Activated CD4-positive, alpha-beta T cell treated with anti-CD3 and anti-CD28 coated beads for 36 hours (primary cell): ENCODE measurements at regions of chr19 and their contacts with region 1.

Region 1: GRCh38 chr19:892243-893050 is 540 bp downstream of the MED16 start:
- DNase-seq: peak; percentile 33
- ATAC-seq: peak; percentile 37
- H3K4me3 Mint-ChIP-seq: peak overlapping the region; percentile 78
- H3K27ac Mint-ChIP-seq: peak overlapping the region; percentile 77
- H3K4me1 Mint-ChIP-seq: peaks cover 13% of the 10 kb centered on the region
- H3K27me3 Mint-ChIP-seq: no peaks in the 10 kb centered on the region

Region 2: GRCh38 chr19:873084-874041 is 19.1 kb before region 1 on chr19:
- CTCF ChIA-PET with region 1: no interaction called
- POLR2A ChIA-PET with region 1: no interaction called
- intact Hi-C with region 1: loop called in 1 of 2 experiments (anchors 1 kb)
- DNase-seq: peak; percentile 85
- ATAC-seq: peak; percentile 89
- H3K4me3 Mint-ChIP-seq: no peak overlapping the region
- H3K27ac Mint-ChIP-seq: no peak overlapping the region
- H3K4me1 Mint-ChIP-seq: peaks cover 12% of the 10 kb centered on the region
- H3K27me3 Mint-ChIP-seq: no peaks in the 10 kb centered on the region

Region 3: GRCh38 chr19:904545-904944 is 12.1 kb after region 1 on chr19:
- CTCF ChIA-PET with region 1: interaction called, 5 read pairs
- POLR2A ChIA-PET with region 1: interaction called, 10 read pairs
- intact Hi-C with region 1: loop called (anchors 1 to 2 kb)
- DNase-seq: no peak
- ATAC-seq: no peak
- H3K4me3 Mint-ChIP-seq: no peak overlapping the region
- H3K27ac Mint-ChIP-seq: no peak overlapping the region
- H3K4me1 Mint-ChIP-seq: peaks cover 53% of the 10 kb centered on the region
- H3K27me3 Mint-ChIP-seq: no peaks in the 10 kb centered on the region

Region 4: GRCh38 chr19:913080-913748 is 20.8 kb after region 1 on chr19 and contains the start of gene R3HDM4:
- CTCF ChIA-PET with region 1: no interaction called
- POLR2A ChIA-PET with region 1: interaction called, 3 read pairs
- intact Hi-C with region 1: loop called (anchors 1 to 2 kb)
- DNase-seq: peak; percentile 92
- ATAC-seq: peak; percentile 57
- H3K4me3 Mint-ChIP-seq: peak within 1 kb of the TSS; percentile 79
- H3K27ac Mint-ChIP-seq: peak within 1 kb of the TSS; percentile 90
- H3K4me1 Mint-ChIP-seq: peaks cover 32% of the 10 kb centered on the region
- H3K27me3 Mint-ChIP-seq: no peaks in the 10 kb centered on the region
- total RNA-seq, gene R3HDM4: 73.7 to 83.3 TPM

Region 5: DNA sequence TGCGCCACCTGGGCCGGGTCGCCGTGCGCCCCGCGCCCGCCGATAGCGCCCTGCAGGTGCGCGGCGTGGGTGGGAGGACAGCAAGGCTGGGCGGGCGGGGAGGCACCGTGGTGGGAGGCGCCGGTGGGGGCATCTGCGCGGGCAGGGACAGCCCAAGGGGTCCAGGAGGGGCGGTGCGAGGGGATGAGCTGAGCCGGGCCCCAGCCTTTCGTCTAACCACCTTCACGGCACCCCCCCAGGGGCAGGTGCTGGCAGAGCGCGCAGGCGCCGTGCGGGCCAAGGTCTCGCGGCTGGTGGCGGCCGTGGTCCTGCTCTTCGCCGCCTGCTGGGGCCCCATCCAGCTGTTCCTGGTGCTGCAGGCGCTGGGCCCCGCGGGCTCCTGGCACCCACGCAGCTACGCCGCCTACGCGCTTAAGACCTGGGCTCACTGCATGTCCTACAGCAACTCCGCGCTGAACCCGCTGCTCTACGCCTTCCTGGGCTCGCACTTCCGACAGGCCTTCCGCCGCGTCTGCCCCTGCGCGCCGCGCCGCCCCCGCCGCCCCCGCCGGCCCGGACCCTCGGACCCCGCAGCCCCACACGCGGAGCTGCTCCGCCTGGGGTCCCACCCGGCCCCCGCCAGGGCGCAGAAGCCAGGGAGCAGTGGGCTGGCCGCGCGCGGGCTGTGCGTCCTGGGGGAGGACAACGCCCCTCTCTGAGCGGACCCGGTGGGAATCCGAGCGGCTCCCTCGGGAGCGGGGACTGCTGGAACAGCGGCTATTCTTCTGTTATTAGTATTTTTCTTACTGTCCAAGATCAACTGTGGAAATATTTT is 27.8 kb after region 1 on chr19:
- CTCF ChIA-PET with region 1: interaction called, 5 read pairs
- POLR2A ChIA-PET with region 1: no interaction called
- intact Hi-C with region 1: loop called (anchors 2 kb)
- DNase-seq: peak; percentile 86
- ATAC-seq: peak; percentile 36
- H3K4me3 Mint-ChIP-seq: peak overlapping the region; percentile 80
- H3K27ac Mint-ChIP-seq: peak overlapping the region; percentile 90
- H3K4me1 Mint-ChIP-seq: peaks cover 21% of the 10 kb centered on the region
- H3K27me3 Mint-ChIP-seq: no peaks in the 10 kb centered on the region

Region 6: GRCh38 chr19:932402-933215 is 40.2 kb after region 1 on chr19:
- CTCF ChIA-PET with region 1: no interaction called
- POLR2A ChIA-PET with region 1: no interaction called
- intact Hi-C with region 1: no loop called
- DNase-seq: peak; percentile 52
- ATAC-seq: peak; percentile 49
- H3K4me3 Mint-ChIP-seq: peak overlapping the region; percentile 30
- H3K27ac Mint-ChIP-seq: no peak overlapping the region
- H3K4me1 Mint-ChIP-seq: peaks cover 14% of the 10 kb centered on the region
- H3K27me3 Mint-ChIP-seq: no peaks in the 10 kb centered on the region

Region 7: DNA sequence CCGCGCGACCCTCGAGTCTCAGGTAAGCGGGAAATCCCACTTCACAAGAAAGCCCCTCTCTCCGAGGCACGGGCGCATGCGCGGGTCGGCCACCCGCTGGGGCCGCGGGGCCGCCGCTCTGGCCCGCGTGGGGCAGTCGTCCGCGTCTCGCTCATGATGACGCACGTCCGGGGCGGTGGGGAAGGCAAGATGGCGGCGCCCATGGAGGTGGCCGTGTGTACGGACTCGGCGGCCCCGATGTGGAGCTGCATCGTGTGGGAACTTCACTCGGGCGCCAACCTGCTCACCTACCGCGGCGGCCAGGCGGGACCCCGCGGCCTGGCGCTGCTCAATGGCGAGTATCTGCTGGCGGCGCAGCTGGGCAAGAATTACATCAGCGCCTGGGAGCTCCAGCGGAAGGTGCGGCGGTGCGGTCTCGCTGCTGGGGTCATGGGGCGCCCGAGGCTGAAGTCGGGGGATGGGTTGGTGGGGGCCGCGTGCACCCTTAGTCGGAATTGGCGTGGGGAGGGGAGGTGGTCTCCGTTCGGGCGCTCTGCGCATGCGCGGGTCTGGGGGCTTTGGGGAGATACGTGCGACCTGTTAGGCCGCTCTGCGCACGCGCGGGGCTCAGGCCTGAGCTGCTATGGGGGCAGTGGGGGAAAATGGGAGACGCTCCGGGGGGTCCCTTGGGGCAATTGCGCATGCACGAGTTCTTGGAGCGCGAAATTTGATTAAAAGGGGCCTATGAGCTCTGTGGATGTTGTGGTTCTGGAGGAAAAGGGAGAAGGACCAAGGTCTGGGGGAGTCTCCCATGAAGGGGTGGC is 91.9 kb after region 1 on chr19 and contains the start of gene WDR18:
- CTCF ChIA-PET with region 1: interaction called, 5 read pairs
- POLR2A ChIA-PET with region 1: no interaction called
- intact Hi-C with region 1: loop called in 1 of 2 experiments (anchors 1 kb)
- DNase-seq: peak; percentile 95
- ATAC-seq: peak; percentile 92
- H3K4me3 Mint-ChIP-seq: peak within 1 kb of the TSS; percentile 91
- H3K27ac Mint-ChIP-seq: peak within 1 kb of the TSS; percentile 86
- H3K4me1 Mint-ChIP-seq: peaks cover 14% of the 10 kb centered on the region
- H3K27me3 Mint-ChIP-seq: no peaks in the 10 kb centered on the region
- total RNA-seq, gene WDR18: 71.6 to 87.8 TPM